Activated CD8-positive, alpha-beta memory T cell treated with anti-CD3 and anti-CD28 coated beads, Interleukin-2, amount 10 ng/mL, durations not matched to agents 7 days and 5 days (primary cell): ENCODE measurements at regions of chr11 and their contacts with region 1.

Region 1: DNA sequence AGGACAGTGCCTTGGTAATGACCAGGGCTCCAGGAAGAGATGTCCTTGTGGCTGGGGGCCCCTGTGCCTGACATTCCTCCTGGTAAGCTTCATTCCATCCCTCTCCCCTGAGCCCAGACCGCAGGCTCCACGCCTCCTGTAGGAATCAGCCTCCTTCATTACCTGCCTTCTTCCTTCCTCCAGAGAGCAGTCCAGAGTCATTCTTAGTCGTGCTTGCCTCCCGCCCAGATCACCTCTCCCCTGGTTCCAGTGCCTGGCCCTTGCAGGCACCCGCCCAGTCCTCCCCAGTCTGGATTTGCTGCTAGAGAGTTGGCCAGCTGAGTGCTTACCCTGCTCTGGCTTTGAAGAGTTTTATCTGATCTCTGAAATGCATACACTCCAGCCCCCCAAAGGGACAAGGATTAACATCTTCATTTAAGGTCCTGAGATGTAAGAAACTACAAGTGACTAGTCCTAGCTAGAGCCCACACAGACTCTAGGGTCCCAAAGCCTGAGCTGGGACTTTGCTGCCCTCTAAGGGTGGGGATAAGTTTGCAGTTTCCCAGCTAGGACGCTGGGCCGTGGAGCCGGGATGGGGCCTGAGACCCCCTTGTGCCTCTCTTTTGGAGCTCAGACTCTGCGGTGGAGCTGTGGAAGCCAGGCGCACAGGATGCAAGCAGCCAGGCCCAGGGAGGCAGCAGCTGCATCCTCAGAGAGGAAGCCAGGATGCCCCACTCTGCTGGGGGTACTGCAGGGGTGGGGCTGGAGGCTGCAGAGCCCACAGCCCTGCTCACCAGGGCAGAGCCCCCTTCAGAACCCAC is 1.6 kb downstream of the NR1H3 start:
- DNase-seq: peak; percentile 57
- ATAC-seq: peak; percentile 84
- H3K4me3 Mint-ChIP-seq: no peak overlapping the region
- H3K27ac Mint-ChIP-seq: no peak overlapping the region
- H3K4me1 Mint-ChIP-seq: peaks cover 10% of the 10 kb centered on the region
- H3K27me3 Mint-ChIP-seq: no peaks in the 10 kb centered on the region

Region 2: DNA sequence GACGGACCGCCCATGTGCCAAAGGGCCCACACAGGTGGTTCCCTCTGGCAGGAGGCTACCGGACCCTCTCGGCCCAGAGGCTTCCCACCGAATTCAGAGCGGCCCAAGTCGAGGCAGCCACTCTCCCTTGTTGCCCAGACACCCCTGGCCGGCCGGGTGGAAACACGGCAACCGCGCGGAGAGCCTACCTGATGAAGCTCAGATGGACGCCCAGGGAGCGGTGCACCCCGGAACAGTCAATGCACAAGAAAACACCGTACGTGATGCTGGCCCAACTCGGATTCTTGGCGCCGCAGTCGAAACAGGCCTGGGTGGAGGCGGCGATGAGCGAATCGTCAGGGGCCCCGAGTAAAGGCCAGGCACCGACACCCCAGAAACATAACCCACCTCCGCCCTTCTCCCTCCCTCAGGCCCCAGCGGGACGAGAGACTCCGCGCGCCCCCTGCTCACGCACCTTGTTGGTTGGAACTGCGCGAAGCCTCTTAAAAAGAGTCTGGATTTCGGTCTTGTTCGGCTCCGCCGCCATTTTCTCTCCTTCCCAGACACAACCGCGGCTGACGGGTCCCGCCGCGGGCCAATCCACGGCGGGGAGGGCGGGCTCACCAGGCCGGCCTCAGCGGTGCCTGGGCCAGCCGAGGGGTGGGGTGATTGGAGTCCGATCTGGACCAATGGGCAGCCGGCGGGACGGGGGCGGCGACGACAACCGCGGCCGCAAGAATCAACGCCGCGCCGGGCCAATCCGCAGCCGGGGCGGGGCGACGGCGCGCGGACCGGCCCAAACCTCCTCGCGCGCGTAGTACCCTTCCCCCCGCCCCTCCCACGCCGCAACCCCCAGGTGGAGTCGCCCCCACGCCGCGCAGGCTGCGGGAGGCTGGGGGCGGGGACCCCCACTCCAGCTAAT is 82.8 kb before region 1 on chr11 and contains the start of gene ARFGAP2:
- CTCF ChIA-PET with region 1: interaction called, 41 read pairs
- DNase-seq: peak; percentile 97
- ATAC-seq: peak; percentile 95
- H3K4me3 Mint-ChIP-seq: peak within 1 kb of the TSS; percentile 94
- H3K27ac Mint-ChIP-seq: peak within 1 kb of the TSS; percentile 100
- H3K4me1 Mint-ChIP-seq: peaks cover 52% of the 10 kb centered on the region
- H3K27me3 Mint-ChIP-seq: no peaks in the 10 kb centered on the region
- total RNA-seq, gene ARFGAP2: 103 TPM

Region 3: DNA sequence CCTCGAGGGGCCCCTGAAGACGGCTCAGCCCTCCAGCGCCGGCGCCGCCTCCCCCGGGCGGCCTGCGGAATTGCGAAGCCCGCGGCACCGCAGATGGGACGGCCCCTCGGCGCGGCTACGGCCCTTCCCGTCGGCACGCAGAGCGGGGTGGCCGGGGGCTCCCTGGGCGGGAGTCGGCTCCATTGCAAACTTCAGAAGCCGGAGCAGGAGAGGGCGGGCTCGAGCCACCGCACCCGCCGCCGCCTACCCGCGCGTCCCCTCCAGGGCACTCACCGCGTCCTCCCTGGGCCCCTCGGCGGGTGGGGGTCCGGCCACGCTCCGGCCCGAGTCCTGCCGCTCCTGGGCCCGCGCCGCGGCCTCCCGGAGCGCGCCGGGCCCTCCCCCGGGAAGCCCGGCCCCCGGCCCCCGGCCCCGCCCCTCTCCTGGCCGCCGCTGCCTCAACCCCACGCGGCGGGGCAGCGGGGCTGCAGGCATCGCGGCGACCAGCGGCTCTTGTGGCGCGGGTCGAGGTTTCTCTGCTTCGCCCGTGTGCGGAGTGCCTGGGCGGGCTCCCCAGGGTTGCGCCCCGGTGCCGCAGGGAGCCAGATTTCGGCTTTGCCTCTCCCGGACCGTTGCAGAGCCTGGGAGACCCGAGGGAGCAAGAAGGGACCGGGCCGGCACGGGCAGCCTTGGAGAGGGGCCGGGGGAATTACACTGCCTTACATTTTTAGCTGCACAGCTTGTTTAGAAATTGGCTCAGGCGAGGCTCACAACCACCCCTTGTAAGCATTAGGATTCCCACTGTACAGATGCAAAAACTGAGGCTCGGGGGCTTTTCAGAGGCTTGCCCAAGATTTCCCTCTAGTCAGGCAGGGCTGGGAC is 73.1 kb before region 1 on chr11 and contains the start of gene PACSIN3:
- CTCF ChIA-PET with region 1: interaction called, 11 read pairs
- DNase-seq: no peak
- ATAC-seq: peak; percentile 81
- H3K4me3 Mint-ChIP-seq: peak within 1 kb of the TSS; percentile 62
- H3K27ac Mint-ChIP-seq: no peak within 1 kb of the TSS
- H3K4me1 Mint-ChIP-seq: peaks cover 13% of the 10 kb centered on the region
- H3K27me3 Mint-ChIP-seq: peaks cover 48% of the 10 kb centered on the region
- total RNA-seq, gene PACSIN3: 0.64 to 2.2 TPM

Region 4: GRCh38 chr11:47213985-47214564 is 45.3 kb before region 1 on chr11:
- CTCF ChIA-PET with region 1: interaction called, 21 read pairs
- DNase-seq: peak; percentile 94
- ATAC-seq: peak; percentile 82
- H3K4me3 Mint-ChIP-seq: peak overlapping the region; percentile 97
- H3K27ac Mint-ChIP-seq: peak overlapping the region; percentile 100
- H3K4me1 Mint-ChIP-seq: peaks cover 43% of the 10 kb centered on the region
- H3K27me3 Mint-ChIP-seq: no peaks in the 10 kb centered on the region

Region 5: DNA sequence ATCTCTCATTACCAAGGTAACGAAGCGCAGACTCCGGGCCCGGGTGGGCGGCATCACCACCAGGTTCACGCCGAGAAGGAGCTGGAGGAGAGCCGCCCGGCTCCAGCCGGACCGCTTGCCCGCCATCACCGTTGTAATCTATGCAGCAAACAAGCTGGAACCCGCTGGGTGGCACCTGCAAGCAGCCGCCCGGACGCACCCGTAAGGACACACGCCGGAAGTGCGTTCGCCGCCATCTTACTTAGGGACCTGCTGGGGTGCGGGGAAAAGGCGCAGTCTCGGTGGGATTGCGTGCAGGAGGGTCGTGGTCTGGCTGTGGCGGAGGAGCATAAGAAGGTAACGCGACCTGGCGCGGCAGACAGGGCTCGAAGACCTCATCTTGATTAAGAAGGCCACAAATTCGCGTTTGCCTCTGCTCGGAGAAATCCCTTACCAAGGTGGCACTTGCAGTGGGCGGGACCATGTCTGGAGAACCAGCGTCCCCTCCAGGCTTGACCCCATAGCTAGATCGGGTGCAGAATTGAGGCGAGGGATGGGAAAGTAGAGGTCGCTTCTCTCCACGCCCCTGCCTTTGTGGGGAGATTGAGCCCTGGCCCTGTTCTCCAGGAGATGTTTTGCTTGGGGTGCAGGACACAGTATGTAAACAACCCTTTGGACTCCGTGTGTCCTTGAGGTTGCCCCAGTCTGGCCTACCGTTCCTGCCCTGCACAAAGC is 10.6 kb before region 1 on chr11 and contains the start of gene ACP2:
- CTCF ChIA-PET with region 1: interaction called, 32 read pairs
- DNase-seq: peak; percentile 93
- ATAC-seq: peak; percentile 98
- H3K4me3 Mint-ChIP-seq: peak within 1 kb of the TSS; percentile 89
- H3K27ac Mint-ChIP-seq: peak within 1 kb of the TSS; percentile 94
- H3K4me1 Mint-ChIP-seq: peaks cover 29% of the 10 kb centered on the region
- H3K27me3 Mint-ChIP-seq: no peaks in the 10 kb centered on the region
- total RNA-seq, gene ACP2: 26.0 to 29.7 TPM

Region 6: DNA sequence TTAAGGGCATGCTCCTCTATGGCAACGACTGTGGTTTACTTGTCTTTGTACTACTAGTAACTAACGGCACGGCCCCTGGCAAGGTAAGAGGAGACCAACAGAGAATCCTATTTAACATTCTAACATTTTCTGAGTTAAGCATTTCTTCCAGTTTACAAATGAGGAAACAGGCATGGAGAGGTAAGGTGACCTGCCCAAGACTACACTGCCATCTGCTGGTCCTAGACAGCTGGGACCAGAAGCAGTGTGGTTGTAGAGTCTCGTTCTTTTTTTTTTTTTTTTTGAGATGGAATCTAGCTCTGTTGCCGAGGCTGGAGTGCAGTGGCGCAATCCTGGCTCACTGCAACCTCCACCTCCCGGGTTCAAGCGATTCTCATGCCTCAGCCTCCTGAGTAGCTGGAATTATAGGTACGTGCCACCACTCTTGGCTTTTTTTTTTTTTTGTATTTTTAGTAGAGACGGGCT is 194.8 kb after region 1 on chr11:
- CTCF ChIA-PET with region 1: interaction called, 10 read pairs
- DNase-seq: peak; percentile 85
- ATAC-seq: peak; percentile 88
- H3K4me3 Mint-ChIP-seq: no peak overlapping the region
- H3K27ac Mint-ChIP-seq: no peak overlapping the region
- H3K4me1 Mint-ChIP-seq: peaks cover 4% of the 10 kb centered on the region
- H3K27me3 Mint-ChIP-seq: no peaks in the 10 kb centered on the region